ENCODE measurements at regions of chr4 and their contacts with region 1.

Region 1: DNA sequence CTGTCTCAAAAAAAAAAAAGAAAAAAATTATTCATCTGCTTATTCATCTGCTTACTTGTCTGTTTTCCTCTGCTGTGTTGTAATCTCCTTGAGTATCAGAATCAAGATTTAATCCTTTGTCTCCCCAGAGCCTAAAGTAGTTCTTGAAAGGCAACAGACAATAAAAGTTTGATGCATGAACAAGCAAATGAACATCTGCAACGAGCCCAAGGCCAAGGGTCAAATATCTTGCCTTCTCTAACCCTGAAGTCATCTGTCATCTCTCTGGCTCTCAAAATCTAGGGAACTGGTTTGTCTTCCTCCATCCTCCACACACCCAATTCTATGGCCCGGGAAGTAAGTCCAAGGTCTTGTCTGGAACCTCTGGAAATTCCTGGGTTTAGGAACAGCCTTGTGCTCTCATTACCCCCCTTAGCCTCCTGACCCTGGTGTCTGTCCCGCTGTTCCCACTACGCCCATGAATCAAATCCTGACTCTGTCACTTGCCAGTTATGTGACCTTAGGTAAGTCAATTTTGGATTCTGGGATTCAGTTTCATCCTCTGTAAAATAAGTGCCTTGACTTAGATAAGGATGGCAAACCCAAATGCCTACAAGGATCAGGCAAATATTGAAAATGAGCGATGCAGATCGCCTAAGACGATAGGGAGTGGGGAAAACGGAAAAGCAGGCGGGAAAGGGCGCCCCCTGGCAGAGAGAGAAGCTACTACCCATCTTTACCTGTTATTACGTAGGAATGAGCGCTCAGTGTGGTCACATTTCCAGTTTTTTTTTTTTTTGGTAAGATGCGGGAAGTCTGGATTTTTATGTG is 102.7 kb upstream of the DHX15 start:
- DNase-seq: peak; percentile 68
- H3K4me3 Mint-ChIP-seq: no peak overlapping the region
- H3K27ac Mint-ChIP-seq: no peak overlapping the region
- H3K4me1 Mint-ChIP-seq: no peaks in the 10 kb centered on the region
- H3K27me3 Mint-ChIP-seq: peaks cover 3% of the 10 kb centered on the region

Region 2: DNA sequence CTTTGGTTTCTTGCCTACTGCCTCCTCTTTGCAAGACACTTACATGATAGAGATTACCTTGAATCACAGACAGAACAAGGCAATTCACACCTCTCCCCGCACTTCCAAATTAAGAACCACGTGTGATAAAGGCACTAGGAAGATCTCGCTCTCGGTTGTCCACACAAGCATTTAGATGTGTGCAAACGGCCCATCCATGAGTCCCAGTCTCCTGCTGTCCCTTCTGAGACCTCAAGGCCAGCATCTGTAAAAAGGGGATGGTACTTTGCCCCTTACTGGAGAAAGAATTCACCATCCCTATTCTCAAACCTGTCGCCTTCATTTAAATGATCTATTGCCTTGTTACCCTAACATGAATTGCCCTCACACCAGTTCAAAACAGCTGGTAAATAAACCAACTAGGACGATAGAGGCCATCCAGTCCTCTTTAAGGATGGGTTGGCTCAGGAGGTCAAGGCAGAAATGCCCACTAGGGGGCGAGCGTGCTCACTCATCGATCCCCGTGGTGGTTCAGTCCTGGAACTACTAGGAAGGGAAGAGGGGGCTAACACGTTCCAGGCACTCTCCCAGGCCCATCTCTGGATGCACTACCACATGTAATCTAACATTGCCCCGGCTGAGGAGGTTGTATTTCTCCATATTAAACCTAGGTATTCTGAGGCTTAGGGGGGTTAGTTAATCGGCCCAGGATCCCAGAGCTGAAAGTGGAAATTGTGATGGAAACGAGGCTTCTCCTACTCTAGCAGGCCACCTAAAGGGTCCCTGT is 198.5 kb before region 1 on chr4:
- intact Hi-C with region 1: loop called (anchors 1 kb)
- DNase-seq: peak; percentile 91
- H3K4me3 Mint-ChIP-seq: no peak overlapping the region
- H3K27ac Mint-ChIP-seq: no peak overlapping the region
- H3K4me1 Mint-ChIP-seq: peaks cover 5% of the 10 kb centered on the region
- H3K27me3 Mint-ChIP-seq: peaks cover 22% of the 10 kb centered on the region